Sigmoid colon (tissue), 7 donors: ENCODE measurements at regions of chrX and their contacts with region 1.

Region 1: GRCh38 chrX:131841496-131842410 is 181.3 kb upstream of the STK26 start:
- DNase-seq: no peak
- H3K4me3 ChIP-seq: no peak overlapping the region
- H3K27ac ChIP-seq: no peak overlapping the region
- H3K4me1 ChIP-seq: no peaks in the 10 kb centered on the region
- H3K27me3 ChIP-seq: no peaks in the 10 kb centered on the region
- CTCF ChIP-seq: peak; percentile 33 to 61 (median 52)
- EP300 ChIP-seq: no peak
- POLR2A ChIP-seq: no peak

Region 2: DNA sequence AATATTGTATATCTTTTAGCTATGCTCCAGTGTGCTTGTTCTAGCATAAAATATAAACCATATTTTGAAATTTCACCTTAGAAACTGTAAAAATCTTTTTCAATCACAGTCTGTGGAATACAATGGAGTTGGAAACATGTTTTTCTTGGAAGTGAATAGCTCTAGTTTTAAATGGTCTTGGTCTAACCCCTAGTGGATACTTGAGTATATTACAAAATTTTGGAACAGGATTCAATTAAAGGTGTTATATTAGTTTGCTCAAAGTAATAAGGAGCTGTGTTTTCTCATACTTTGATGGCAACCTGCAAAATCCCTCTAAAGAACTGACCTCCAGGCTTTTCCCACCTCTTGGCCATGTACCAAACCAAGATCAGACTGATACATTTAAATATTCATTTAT is 229.5 kb after region 1 on chrX:
- intact Hi-C with region 1: loop called (anchors 5 kb)
- DNase-seq: no peak
- H3K4me3 ChIP-seq: no peak overlapping the region
- H3K27ac ChIP-seq: no peak overlapping the region
- H3K4me1 ChIP-seq: no peaks in the 10 kb centered on the region
- H3K27me3 ChIP-seq: no peaks in the 10 kb centered on the region
- CTCF ChIP-seq: no peak
- EP300 ChIP-seq: no peak
- POLR2A ChIP-seq: no peak

Region 3: GRCh38 chrX:132219343-132219768 is 377.6 kb after region 1 on chrX and contains the start of gene RAP2C:
- intact Hi-C with region 1: loop called (anchors 10 kb)
- DNase-seq: peak; percentile 86
- H3K4me3 ChIP-seq: peak within 1 kb of the TSS; percentile 48 to 88 (median 80)
- H3K27ac ChIP-seq: peak within 1 kb of the TSS; percentile 94 to 99 (median 96)
- H3K4me1 ChIP-seq: peaks cover 0 to 25% (median 10%) of the 10 kb centered on the region in 4 donors
- H3K27me3 ChIP-seq: no peaks in the 10 kb centered on the region
- CTCF ChIP-seq: peak in 3 of 4 experiments; percentile 16 to 37 (median 17)
- EP300 ChIP-seq: no peak
- POLR2A ChIP-seq: peak in 1 of 2 donors; percentile 12
- total RNA-seq, gene RAP2C: 10.3 to 16.3 (median 13.2) TPM

Region 4: DNA sequence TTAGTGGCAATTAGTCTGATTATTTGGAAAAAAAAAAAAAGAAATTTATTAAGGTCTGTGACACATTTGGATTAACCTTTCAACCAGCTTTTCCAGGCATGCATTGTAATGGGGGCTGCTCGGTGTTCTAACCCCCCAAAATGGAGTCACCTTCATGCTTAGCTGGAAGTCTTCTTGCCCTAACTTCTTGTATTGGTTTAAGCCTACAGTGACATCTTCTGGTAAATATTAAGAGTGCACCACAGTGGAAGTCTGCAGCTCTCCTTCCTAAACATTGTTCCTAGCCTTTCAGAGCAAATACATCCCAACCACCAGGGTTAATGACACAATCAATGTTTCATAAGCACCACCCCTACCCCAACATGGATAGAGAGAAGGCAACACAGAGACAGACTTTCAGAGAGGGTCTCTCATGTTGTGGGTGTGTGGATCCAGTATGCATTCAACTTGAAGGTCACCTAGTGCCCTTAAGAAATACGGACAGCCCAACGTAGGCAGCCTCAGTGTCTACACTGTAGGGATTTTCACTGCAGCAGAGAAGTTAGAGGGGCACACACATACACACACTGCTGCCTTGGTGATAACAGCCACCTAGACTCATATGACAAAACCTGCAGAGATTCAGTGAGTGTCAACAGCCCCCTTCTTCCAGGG is 790.0 kb after region 1 on chrX:
- intact Hi-C with region 1: loop called (anchors 5 kb)
- DNase-seq: no peak
- H3K4me3 ChIP-seq: no peak overlapping the region
- H3K27ac ChIP-seq: no peak overlapping the region
- H3K4me1 ChIP-seq: no peaks in the 10 kb centered on the region
- H3K27me3 ChIP-seq: no peaks in the 10 kb centered on the region
- CTCF ChIP-seq: peak; percentile 7 to 52 (median 26)
- EP300 ChIP-seq: no peak
- POLR2A ChIP-seq: no peak